ENCODE measurements at regions of chr20 and their contacts with region 1.

Region 1: DNA sequence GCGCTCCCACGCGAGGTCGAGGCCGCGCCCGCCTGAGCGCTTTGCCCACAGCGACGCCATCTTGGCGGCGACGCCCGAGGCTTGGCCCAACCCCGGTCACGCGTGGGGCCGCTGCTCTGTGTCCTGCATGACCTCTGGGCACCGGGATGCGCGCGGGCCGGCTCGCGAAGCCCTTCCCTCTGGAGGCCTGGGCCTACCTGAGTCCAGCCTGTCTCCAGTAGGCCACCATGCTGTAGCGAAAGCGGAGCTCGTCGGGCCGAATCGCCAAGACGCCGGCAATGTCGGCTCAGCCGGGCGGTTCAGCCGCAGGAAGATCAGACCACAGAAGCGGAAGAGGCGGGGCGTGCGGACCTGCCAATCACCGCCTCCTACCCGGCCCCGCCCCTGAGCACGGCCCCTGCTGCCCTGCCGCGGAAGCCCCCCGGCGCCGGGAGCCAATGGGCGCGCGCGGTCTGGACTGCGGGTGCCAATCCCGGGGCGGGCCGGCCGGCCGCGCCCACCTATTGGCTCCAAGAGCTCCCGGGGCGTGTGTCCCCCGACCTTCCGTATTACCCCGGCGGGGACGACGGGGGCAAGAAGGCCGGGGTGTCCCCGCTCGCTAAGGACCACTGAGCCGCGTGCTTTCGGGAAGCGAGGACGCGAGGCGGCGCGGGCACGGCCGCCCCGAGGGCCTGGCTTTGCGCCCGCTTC is at the start of gene ATP5F1E:
- DNase-seq: peak; percentile 95
- H3K4me3 Mint-ChIP-seq: peak within 1 kb of the TSS; percentile 91
- H3K27ac Mint-ChIP-seq: peak within 1 kb of the TSS; percentile 91
- H3K4me1 Mint-ChIP-seq: peaks cover 71% of the 10 kb centered on the region
- H3K27me3 Mint-ChIP-seq: no peaks in the 10 kb centered on the region
- total RNA-seq, gene ATP5F1E: 98.1 to 101 TPM

Region 2: DNA sequence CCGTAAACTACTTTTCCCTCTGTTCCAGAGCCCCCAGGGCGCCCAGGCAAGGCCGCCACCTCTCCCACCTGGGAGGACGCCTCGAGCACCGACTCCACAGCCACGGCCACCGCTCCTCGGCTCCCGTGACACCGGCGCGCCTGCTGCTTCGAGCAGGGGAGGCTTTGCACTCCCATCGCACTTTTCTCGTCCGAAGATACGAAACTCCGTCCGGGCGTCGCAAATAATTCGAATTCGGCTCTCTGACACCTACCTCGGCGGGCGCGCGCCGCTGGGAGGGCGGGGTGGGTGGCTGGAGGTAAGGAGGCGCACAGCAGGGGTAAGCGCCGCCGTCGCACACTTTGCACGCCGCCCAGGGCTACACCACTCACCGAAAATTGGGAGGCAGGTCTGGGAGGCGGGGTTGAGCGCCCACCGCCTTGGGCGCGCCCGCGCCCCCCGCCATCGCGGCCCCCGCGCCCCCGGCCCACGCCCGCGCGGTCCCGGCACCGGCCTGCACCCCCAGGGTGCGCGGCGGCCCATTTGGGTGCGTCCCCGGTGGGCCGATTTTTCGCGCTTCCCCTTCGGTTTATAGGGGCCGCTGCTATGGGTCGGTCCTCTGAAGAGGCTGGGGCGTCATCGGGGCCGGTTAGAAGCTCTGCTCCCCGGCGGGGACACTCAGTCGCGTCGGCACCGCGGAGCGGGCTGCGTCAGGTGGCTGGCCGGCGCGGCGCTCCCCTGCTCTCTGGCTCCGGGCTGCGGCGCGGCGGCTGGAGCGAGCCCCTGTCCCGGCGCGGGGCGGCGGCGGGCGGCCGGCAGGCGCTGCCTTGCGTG is 143.4 kb before region 1 on chr20:
- CTCF ChIA-PET with region 1: no interaction called
- POLR2A ChIA-PET with region 1: no interaction called
- DNase-seq: peak; percentile 86
- H3K4me3 Mint-ChIP-seq: peak overlapping the region; percentile 77
- H3K27ac Mint-ChIP-seq: peak overlapping the region; percentile 86
- H3K4me1 Mint-ChIP-seq: peaks cover 31% of the 10 kb centered on the region
- H3K27me3 Mint-ChIP-seq: no peaks in the 10 kb centered on the region

Region 3: GRCh38 chr20:59042796-59043660 is 10.9 kb after region 1 on chr20:
- CTCF ChIA-PET with region 1: interaction called, 16 read pairs
- POLR2A ChIA-PET with region 1: no interaction called
- DNase-seq: peak; percentile 94
- H3K4me3 Mint-ChIP-seq: peak overlapping the region; percentile 90
- H3K27ac Mint-ChIP-seq: peak overlapping the region; percentile 91
- H3K4me1 Mint-ChIP-seq: peaks cover 47% of the 10 kb centered on the region
- H3K27me3 Mint-ChIP-seq: no peaks in the 10 kb centered on the region

Measured in activated CD4-positive, alpha-beta T cell treated with anti-CD3 and anti-CD28 coated beads, Interleukin-2, amount 10 ng/mL, durations not matched to agents 7 days and 5 days (primary cell).